HepG2 (cell line): ENCODE measurements at regions of chr19 and their contacts with region 1.

Region 1: DNA sequence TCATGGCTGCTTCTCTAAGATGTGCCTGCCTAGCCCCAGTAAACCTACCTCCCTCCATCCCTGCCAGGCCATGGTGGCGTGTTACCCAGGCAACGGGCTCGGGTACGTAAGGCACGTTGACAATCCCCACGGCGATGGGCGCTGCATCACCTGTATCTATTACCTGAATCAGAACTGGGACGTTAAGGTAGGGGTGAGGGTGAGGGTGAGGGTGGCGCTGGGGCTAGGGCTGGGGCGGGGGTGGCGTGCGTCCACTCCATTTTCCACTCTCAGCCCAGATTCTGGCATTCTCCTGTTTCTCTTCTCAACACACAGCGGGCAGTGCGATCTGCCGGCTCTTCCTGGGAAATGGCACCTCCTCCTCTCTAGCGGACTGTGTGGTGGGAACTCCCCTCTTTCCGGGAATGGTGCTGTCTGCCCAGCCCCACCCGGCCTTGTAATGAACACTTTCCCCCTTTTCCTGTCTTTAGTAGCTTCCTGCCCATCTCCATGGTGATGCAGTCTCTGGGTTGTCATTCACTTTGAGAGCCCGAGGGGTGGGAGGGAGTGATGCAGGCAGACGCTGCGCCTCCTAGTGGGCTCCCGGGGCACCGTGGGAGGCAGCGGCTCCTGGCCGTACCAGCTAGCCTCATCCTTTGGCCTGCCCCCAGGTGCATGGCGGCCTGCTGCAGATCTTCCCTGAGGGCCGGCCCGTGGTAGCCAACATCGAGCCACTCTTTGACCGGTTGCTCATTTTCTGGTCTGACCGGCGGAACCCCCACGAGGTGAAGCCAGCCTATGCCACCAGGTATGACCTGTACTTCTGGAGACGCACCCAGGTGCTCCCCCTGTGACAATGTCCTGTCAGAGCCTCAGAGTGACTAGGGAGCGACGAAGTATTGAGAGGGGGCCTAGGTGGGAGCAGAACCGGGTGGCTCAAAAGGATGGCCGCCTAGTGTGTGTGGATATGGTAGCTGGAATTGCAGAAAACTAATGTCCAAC is 7.8 kb downstream of the EGLN2 start:
- DNase-seq: peak; percentile 66
- ATAC-seq: peak; percentile 81
- H3K4me3 ChIP-seq: no peak overlapping the region
- H3K27ac ChIP-seq: no peak overlapping the region
- H3K4me1 ChIP-seq: peaks cover 33% of the 10 kb centered on the region
- H3K27me3 ChIP-seq: no peaks in the 10 kb centered on the region; a peak in 1 of 5 replicates
- CTCF ChIP-seq: peak; percentile 77
- EP300 ChIP-seq: no peak
- POLR2A ChIP-seq: no peak
- RAD21 ChIP-seq: peak; percentile 74

Region 2: GRCh38 chr19:40662921-40663694 is 143.7 kb before region 1 on chr19:
- CTCF ChIA-PET with region 1: interaction called, 4 read pairs
- POLR2A ChIA-PET with region 1: no interaction called
- in situ Hi-C with region 1: loop called (anchors 5 kb)
- intact Hi-C with region 1: loop called (anchors 5 kb)
- DNase-seq: peak; percentile 63
- ATAC-seq: peak; percentile 96
- H3K4me3 ChIP-seq: peak overlapping the region; percentile 64 to 77 (median 65)
- H3K27ac ChIP-seq: no peak overlapping the region
- H3K4me1 ChIP-seq: peaks cover 11% of the 10 kb centered on the region
- H3K27me3 ChIP-seq: peaks cover 3 to 22% of the 10 kb centered on the region in 2 experiments; a peak in 2 of 5 replicates
- CTCF ChIP-seq: peak; percentile 97
- EP300 ChIP-seq: no peak
- POLR2A ChIP-seq: no peak
- RAD21 ChIP-seq: peak; percentile 98

Region 3: GRCh38 chr19:40716655-40717324 is 90.0 kb before region 1 on chr19 and contains the starts of genes COQ8B and ITPKC:
- CTCF ChIA-PET with region 1: no interaction called
- POLR2A ChIA-PET with region 1: interaction called, 4 read pairs
- in situ Hi-C with region 1: no loop called
- intact Hi-C with region 1: loop called (anchors 5 kb)
- DNase-seq: peak; percentile 95
- ATAC-seq: peak; percentile 64
- H3K4me3 ChIP-seq: peak within 1 kb of the TSS; percentile 90 to 99 (median 92)
- H3K27ac ChIP-seq: peak within 1 kb of the TSS; percentile 95
- H3K4me1 ChIP-seq: peaks cover 45% of the 10 kb centered on the region
- H3K27me3 ChIP-seq: no peaks in the 10 kb centered on the region; a peak in 1 of 5 replicates
- CTCF ChIP-seq: no peak
- EP300 ChIP-seq: no peak
- POLR2A ChIP-seq: peak; percentile 64 to 73; a peak in 3 of 4 replicates
- RAD21 ChIP-seq: peak; percentile 53; the same call in 1 of the 2 replicates
- total RNA-seq, gene COQ8B: 10.3 and 17.2 TPM in 2 replicates
- total RNA-seq, gene ITPKC: 11.2 and 11.3 TPM in 2 replicates

Region 4: GRCh38 chr19:40744554-40745401 is 62.0 kb before region 1 on chr19:
- CTCF ChIA-PET with region 1: interaction called, 4 read pairs
- POLR2A ChIA-PET with region 1: interaction called, 7 read pairs
- in situ Hi-C with region 1: no loop called
- intact Hi-C with region 1: loop called (anchors 2 kb)
- DNase-seq: peak; percentile 21
- ATAC-seq: peak; percentile 57
- H3K4me3 ChIP-seq: peak overlapping the region in 1 of 3 experiments; percentile 26; a peak in 1 of 6 replicates
- H3K27ac ChIP-seq: peak overlapping the region; percentile 40
- H3K4me1 ChIP-seq: peaks cover 42% of the 10 kb centered on the region
- H3K27me3 ChIP-seq: no peaks in the 10 kb centered on the region; a peak in 1 of 5 replicates
- CTCF ChIP-seq: peak; percentile 62
- EP300 ChIP-seq: no peak
- POLR2A ChIP-seq: no peak; a peak in 1 of 4 replicates
- RAD21 ChIP-seq: peak; percentile 45; the same call in 1 of the 2 replicates

Region 5: GRCh38 chr19:40750059-40750873 is 56.5 kb before region 1 on chr19 and contains the start of gene ACTMAP:
- CTCF ChIA-PET with region 1: interaction called, 4 read pairs
- POLR2A ChIA-PET with region 1: interaction called, 10 read pairs
- in situ Hi-C with region 1: loop called (anchors 5 kb)
- intact Hi-C with region 1: loop called (anchors 2 kb)
- DNase-seq: peak; percentile 99
- ATAC-seq: peak; percentile 87
- H3K4me3 ChIP-seq: peak within 1 kb of the TSS; percentile 73 to 89 (median 74)
- H3K27ac ChIP-seq: peak within 1 kb of the TSS; percentile 95
- H3K4me1 ChIP-seq: peaks cover 68% of the 10 kb centered on the region
- H3K27me3 ChIP-seq: no peaks in the 10 kb centered on the region; a peak in 1 of 5 replicates
- CTCF ChIP-seq: no peak
- EP300 ChIP-seq: no peak
- POLR2A ChIP-seq: peak in 1 of 2 experiments; percentile 65; a peak in 3 of 4 replicates
- RAD21 ChIP-seq: peak; percentile 11; the same call in 1 of the 2 replicates
- total RNA-seq, gene ACTMAP: 2.2 and 3.9 TPM in 2 replicates

Region 6: GRCh38 chr19:40777937-40778705 is 28.7 kb before region 1 on chr19 and contains the start of gene RAB4B:
- CTCF ChIA-PET with region 1: no interaction called
- POLR2A ChIA-PET with region 1: interaction called, 28 read pairs
- in situ Hi-C with region 1: no loop called
- intact Hi-C with region 1: no loop called
- DNase-seq: peak; percentile 99
- ATAC-seq: peak; percentile 88
- H3K4me3 ChIP-seq: peak within 1 kb of the TSS; percentile 70 to 88 (median 81)
- H3K27ac ChIP-seq: peak within 1 kb of the TSS; percentile 97
- H3K4me1 ChIP-seq: peaks cover 31% of the 10 kb centered on the region
- H3K27me3 ChIP-seq: no peaks in the 10 kb centered on the region; a peak in 1 of 5 replicates
- CTCF ChIP-seq: no peak; the same call in 1 of the 2 replicates
- EP300 ChIP-seq: no peak
- POLR2A ChIP-seq: peak; percentile 1 to 45
- RAD21 ChIP-seq: 0 out of 2 replicates have a peak, but pooled peaks have one; percentile 11
- total RNA-seq, gene RAB4B: 2.2 and 3.3 TPM in 2 replicates

Region 7: DNA sequence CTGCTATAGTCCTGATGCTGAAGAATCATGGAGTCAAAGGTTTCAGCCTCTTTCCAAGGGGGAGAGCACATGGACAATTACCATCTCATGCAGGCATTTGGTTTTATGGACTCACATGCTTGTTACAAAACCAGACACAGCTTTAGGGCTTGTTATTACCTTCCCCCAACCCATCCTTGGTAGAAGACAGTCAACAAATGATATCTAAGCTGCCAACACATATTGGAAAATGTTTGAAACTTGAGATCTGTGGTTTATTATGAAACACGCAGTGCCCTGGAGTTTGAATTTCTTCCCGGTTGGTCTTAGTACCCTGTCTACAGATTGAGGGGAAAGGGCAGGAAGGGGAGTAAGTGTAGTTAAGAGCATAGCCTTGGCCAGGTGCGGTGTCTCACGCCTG is 56.0 kb after region 1 on chr19:
- CTCF ChIA-PET with region 1: no interaction called
- POLR2A ChIA-PET with region 1: no interaction called
- in situ Hi-C with region 1: no loop called
- intact Hi-C with region 1: no loop called
- DNase-seq: no peak
- ATAC-seq: no peak
- H3K4me3 ChIP-seq: no peak overlapping the region
- H3K27ac ChIP-seq: no peak overlapping the region
- H3K4me1 ChIP-seq: no peaks in the 10 kb centered on the region
- H3K27me3 ChIP-seq: no peaks in the 10 kb centered on the region
- CTCF ChIP-seq: no peak
- EP300 ChIP-seq: no peak
- POLR2A ChIP-seq: no peak
- RAD21 ChIP-seq: no peak

Region 8: DNA sequence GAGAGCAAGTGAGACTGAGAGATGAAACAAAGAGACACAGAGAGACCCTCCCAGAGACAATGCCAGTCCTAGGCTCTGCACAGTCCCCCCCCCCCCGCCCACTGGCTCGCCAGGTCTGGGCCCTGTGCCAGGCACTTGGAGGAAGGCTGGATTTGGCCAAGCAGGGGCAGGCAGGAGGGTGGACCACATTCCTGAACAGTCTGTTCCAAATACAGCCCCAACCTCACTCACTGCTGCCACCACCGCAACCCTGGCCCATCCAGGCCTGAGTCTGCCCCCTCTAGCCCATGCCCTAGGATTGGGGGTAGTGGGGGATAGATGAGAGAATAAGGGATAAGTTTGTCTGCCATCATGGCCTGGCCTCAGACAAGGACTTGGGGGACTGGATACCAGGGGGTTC is 326.5 kb after region 1 on chr19:
- CTCF ChIA-PET with region 1: no interaction called
- POLR2A ChIA-PET with region 1: no interaction called
- in situ Hi-C with region 1: loop called (anchors 10 kb)
- intact Hi-C with region 1: no loop called
- DNase-seq: no peak
- ATAC-seq: no peak
- H3K4me3 ChIP-seq: no peak overlapping the region
- H3K27ac ChIP-seq: no peak overlapping the region
- H3K4me1 ChIP-seq: no peaks in the 10 kb centered on the region
- H3K27me3 ChIP-seq: peaks cover 1 to 4% of the 10 kb centered on the region in 2 experiments; a peak in 4 of 5 replicates
- CTCF ChIP-seq: no peak
- EP300 ChIP-seq: no peak
- POLR2A ChIP-seq: no peak
- RAD21 ChIP-seq: no peak